Activated CD4-positive, alpha-beta memory T cell treated with anti-CD3 and anti-CD28 coated beads, Interleukin-2, amount 10 ng/mL, durations not matched to agents 7 days and 5 days (primary cell): ENCODE measurements at regions of chr1 and their contacts with region 1.

Region 1: GRCh38 chr1:154324669-154325582 is at the start of gene ATP8B2:
- DNase-seq: peak; percentile 85
- H3K4me3 Mint-ChIP-seq: peak within 1 kb of the TSS; percentile 86
- H3K27ac Mint-ChIP-seq: peak within 1 kb of the TSS; percentile 89
- H3K4me1 Mint-ChIP-seq: peaks cover 42% of the 10 kb centered on the region
- H3K27me3 Mint-ChIP-seq: peaks cover 17% of the 10 kb centered on the region
- total RNA-seq, gene ATP8B2: 142 to 149 TPM

Region 2: GRCh38 chr1:154272217-154272998 is 52.5 kb before region 1 on chr1 and contains the start of gene HAX1:
- CTCF ChIA-PET with region 1: interaction called, 9 read pairs
- POLR2A ChIA-PET with region 1: interaction called, 34 read pairs
- DNase-seq: peak; percentile 98
- H3K4me3 Mint-ChIP-seq: peak within 1 kb of the TSS; percentile 91
- H3K27ac Mint-ChIP-seq: peak within 1 kb of the TSS; percentile 94
- H3K4me1 Mint-ChIP-seq: peaks cover 43% of the 10 kb centered on the region
- H3K27me3 Mint-ChIP-seq: no peaks in the 10 kb centered on the region
- total RNA-seq, gene HAX1: 141 to 142 TPM

Region 3: DNA sequence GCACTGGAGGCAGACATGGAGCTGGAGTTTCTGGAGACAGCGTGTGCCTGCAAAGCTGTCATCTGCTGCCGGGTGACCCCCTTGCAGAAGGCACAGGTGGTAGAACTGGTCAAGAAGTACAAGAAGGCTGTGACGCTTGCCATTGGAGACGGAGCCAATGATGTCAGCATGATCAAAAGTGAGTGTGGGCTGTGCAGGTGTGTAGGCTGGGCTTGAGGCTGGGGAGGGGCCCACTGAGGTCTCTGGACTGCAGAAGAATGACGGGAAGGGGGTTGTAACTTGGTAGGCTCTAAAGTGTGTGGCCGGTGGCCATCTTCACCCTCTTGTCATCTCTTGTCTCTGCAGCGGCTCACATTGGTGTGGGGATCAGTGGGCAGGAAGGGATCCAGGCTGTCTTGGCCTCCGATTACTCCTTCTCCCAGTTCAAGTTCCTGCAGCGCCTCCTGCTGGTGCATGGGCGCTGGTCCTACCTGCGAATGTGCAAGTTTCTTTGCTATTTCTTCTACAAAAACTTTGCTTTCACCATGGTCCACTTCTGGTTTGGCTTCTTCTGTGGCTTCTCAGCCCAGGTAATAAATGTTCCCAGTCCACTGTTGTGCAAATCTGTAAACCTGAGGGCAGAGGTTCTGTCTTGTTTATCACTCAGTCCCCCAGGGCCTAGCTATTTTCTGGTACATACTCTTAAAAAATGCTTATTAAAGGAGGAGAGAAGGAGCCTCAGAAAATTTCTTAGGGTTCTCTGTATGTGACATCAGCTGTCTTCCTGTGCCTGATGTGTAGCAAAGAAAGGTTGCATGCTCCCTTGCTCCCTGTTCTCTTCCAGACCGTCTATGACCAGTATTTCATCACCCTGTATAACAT is 20.3 kb after region 1 on chr1:
- CTCF ChIA-PET with region 1: interaction called, 42 read pairs
- POLR2A ChIA-PET with region 1: interaction called, 31 read pairs
- DNase-seq: peak; percentile 87
- H3K4me3 Mint-ChIP-seq: peak overlapping the region; percentile 73
- H3K27ac Mint-ChIP-seq: peak overlapping the region; percentile 65
- H3K4me1 Mint-ChIP-seq: peaks cover 75% of the 10 kb centered on the region
- H3K27me3 Mint-ChIP-seq: no peaks in the 10 kb centered on the region